ENCODE measurements at regions of chr1 and their contacts with region 1.

Region 1: DNA sequence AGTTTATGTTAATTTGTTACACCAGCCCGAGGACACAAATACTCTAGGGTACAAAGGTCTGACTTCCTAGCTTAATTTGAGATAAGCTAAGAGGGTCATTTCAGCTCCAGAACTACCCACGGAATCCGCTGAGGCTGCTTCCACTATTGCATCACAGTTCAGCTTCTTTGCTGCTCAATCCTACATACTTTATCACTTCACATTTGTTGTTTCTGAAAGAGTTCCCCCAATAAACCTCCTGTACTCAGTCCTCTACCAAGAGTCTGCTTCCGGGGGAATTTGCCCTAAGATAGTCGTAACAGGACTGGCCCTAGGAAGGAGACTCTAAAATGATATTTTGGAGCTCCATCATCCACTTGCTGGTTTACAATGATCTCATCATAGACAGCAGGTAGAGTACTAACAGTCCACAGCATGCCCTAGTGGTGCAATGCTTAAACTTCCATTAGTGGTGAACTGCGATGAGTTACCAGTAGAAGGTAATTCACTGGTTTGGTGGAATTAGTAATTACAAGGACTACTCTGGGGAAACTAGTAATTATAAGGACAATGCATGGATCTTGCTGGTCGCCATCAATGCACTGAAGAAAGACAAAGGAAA is 229.3 kb downstream of the USH2A start:
- DNase-seq: no peak
- H3K4me3 Mint-ChIP-seq: no peak overlapping the region
- H3K27ac Mint-ChIP-seq: no peak overlapping the region
- H3K4me1 Mint-ChIP-seq: no peaks in the 10 kb centered on the region
- H3K27me3 Mint-ChIP-seq: no peaks in the 10 kb centered on the region

Region 2: DNA sequence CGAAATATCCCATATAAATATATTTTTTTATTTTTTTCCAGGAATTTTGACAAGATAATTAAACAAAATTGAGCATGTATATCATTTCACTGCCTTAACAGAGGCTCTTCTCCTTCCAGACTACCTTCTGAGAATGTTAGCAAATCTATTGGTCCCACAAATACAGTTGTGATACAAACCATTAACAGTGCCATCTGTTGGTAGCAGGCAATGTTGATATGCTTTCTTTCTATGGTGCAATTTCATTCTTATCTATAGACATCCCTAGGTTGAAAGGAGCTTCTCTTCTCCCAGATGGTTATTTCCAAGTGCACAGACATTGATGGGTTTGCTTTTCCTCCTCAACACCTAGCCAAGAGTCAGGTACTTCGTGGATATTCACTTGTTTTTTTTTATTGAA is 74.3 kb before region 1 on chr1:
- CTCF ChIA-PET with region 1: no interaction called
- POLR2A ChIA-PET with region 1: interaction called, 10 read pairs
- DNase-seq: no peak
- H3K4me3 Mint-ChIP-seq: no peak overlapping the region
- H3K27ac Mint-ChIP-seq: no peak overlapping the region
- H3K4me1 Mint-ChIP-seq: no peaks in the 10 kb centered on the region
- H3K27me3 Mint-ChIP-seq: no peaks in the 10 kb centered on the region